A549 (cell line): ENCODE measurements at regions of chr11 and their contacts with region 1.

Region 1: DNA sequence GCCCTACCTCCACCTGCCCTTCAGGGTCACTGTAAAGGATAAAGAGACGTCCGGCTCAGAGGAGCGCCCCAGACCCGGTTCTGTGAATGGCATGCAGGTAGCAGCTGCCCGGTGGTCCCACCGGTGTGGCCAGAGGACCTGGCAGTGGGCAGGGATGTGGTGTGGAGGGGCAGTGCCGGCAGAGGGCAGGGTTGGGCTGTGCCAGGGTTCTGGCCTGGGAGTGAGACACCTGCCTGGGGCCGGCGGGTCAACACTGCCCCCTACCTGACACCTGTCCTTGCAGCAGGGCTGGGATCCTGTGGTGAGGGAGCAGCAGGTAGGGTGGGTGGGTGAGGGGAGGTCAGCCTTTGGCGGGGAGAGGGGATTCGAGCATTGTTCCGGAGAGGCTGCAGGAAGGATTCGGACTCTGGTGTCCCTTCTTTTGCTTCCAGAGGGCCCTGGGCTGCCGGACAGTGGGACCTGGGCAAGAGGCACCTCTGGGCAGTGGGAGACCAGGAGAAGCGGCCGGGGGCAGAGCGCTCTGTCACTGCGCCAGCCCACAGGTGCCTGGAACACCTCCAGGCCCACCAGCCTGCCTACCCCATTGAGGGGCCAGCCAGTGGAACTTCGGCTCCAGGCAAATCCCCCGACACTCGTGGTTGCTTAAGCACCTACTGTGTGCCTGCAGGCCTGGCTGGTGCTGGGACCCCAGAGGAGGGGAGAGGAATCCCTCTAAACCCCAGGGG is 1.6 kb upstream of the PHLDA2 start:
- DNase-seq: peak; percentile 86 to 90
- ATAC-seq: peak; percentile 45 to 78
- H3K4me3 ChIP-seq: peak overlapping the region; percentile 67
- H3K27ac ChIP-seq: peak overlapping the region; percentile 92 to 94
- H3K4me1 ChIP-seq: peaks cover 29% of the 10 kb centered on the region
- CTCF ChIP-seq: peak; percentile 98
- EP300 ChIP-seq: no peak
- POLR2A ChIP-seq: no peak
- RAD21 ChIP-seq: peak; percentile 94 to 96

Region 2: DNA sequence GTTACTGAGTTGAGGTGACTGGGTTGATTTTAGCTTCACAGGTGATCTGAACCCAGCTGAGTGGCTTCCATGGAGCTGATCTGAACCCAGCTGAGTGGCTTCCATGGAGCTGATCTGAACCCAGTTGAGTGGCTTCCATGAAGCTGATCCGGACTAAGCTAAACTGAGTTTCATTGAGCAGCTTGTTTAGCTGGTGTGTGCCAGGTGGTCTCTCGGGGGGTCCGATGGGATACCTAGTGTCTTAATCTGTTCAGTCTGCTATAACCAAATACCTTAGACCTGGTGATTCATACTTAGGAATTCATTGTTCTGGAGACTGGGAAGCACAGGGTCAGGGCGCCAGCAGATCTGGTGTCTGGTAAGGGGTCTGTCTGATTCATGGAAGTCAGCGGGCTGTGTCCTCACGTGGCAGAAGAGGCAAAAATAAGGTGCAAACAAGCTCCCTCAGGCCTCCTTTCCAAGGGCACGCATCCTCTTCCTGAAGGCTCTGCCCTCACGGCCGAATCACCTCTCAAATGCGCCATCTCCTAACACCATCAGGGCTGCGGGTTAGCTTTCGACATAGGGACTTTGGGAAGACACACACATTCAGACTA is 178.6 kb before region 1 on chr11:
- CTCF ChIA-PET with region 1: no interaction called
- POLR2A ChIA-PET with region 1: no interaction called
- DNase-seq: peak in 1 of 2 experiments; percentile 16
- ATAC-seq: peak in 1 of 2 experiments; percentile 62; a peak in 3 of 6 replicates
- H3K4me3 ChIP-seq: no peak overlapping the region
- H3K27ac ChIP-seq: peak overlapping the region in 1 of 2 experiments; percentile 10; a peak in 1 of 6 replicates
- H3K4me1 ChIP-seq: 0 out of 3 replicates have a peak, but pooled peaks cover 5% of the 10 kb centered on the region
- CTCF ChIP-seq: no peak
- EP300 ChIP-seq: no peak
- POLR2A ChIP-seq: no peak
- RAD21 ChIP-seq: no peak

Region 3: GRCh38 chr11:2892215-2893020 is 38.4 kb before region 1 on chr11:
- CTCF ChIA-PET with region 1: interaction called, 57 read pairs
- POLR2A ChIA-PET with region 1: interaction called, 41 read pairs
- DNase-seq: peak; percentile 49 to 74
- ATAC-seq: peak; percentile 42 to 74
- H3K4me3 ChIP-seq: peak overlapping the region; percentile 42
- H3K27ac ChIP-seq: peak overlapping the region; percentile 74 to 90
- H3K4me1 ChIP-seq: peaks cover 16% of the 10 kb centered on the region
- CTCF ChIP-seq: peak; percentile 83
- EP300 ChIP-seq: no peak
- POLR2A ChIP-seq: peak; percentile 28; the same call in 1 of the 2 replicates
- RAD21 ChIP-seq: peak; percentile 81 to 83

Region 4: GRCh38 chr11:2912498-2912897 is 18.4 kb before region 1 on chr11:
- CTCF ChIA-PET with region 1: interaction called, 37 read pairs
- POLR2A ChIA-PET with region 1: interaction called, 36 read pairs
- DNase-seq: peak; percentile 76 to 87
- ATAC-seq: peak; percentile 72 to 87
- H3K4me3 ChIP-seq: 0 out of 3 replicates have a peak overlapping the region, but pooled peaks have one; percentile 25
- H3K27ac ChIP-seq: peak overlapping the region; percentile 84 to 90
- H3K4me1 ChIP-seq: peaks cover 31% of the 10 kb centered on the region
- CTCF ChIP-seq: no peak
- EP300 ChIP-seq: no peak
- POLR2A ChIP-seq: no peak
- RAD21 ChIP-seq: no peak

Region 5: GRCh38 chr11:2951231-2952110 is 20.6 kb after region 1 on chr11:
- CTCF ChIA-PET with region 1: interaction called, 74 read pairs
- POLR2A ChIA-PET with region 1: interaction called, 3 read pairs
- DNase-seq: no peak
- ATAC-seq: no peak
- H3K4me3 ChIP-seq: no peak overlapping the region
- H3K27ac ChIP-seq: no peak overlapping the region
- H3K4me1 ChIP-seq: peaks cover 5% of the 10 kb centered on the region; the same call in 1 of the 3 replicates
- CTCF ChIP-seq: no peak
- EP300 ChIP-seq: no peak
- POLR2A ChIP-seq: no peak
- RAD21 ChIP-seq: no peak

Region 6: DNA sequence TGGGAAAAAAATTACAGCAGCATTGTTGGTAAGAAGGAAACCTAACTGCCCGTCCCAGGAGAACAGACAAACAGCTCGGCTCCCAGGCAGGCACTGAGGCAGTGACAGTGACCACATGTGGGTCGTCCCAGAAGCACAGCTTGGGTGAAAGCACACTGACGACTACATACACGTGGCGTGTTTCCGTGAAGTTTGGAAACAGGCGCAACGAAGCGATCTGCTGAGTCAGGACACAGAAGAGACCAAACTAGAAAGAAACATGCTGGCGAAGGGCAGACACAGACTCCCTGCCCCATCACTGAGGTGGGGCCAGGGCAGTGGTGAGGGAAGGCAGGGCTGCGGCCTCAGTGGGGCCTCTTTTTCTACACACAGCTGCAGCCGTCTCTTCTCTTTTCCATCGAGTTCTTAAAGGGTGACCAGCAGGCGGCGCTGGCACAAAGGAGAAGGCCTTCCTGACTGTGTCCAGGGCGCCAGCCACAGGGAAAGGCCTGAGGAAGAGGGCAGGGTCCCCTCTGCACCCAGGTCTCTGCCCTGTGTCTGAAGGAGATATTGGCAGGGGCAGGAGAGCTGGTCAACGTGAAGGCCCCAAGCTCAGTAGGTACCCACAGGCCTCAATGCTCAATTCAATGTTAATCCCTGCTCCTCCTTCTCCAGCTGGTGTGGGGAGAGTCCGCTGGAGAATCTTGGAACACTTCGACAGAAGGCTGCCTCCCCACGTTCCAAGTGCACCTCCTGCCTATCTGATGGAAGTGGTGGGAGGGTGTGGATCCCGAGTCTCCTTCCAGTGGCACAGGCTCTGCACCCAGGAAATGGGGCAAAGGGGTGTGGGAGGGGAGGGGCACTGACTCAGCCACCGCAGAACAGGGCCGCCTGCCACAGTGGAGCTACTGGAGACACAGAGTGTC is 106.4 kb after region 1 on chr11:
- CTCF ChIA-PET with region 1: interaction called, 14 read pairs
- POLR2A ChIA-PET with region 1: no interaction called
- DNase-seq: peak; percentile 75 to 76
- ATAC-seq: peak; percentile 84 to 98
- H3K4me3 ChIP-seq: no peak overlapping the region
- H3K27ac ChIP-seq: no peak overlapping the region
- H3K4me1 ChIP-seq: no peaks in the 10 kb centered on the region
- CTCF ChIP-seq: peak; percentile 87
- EP300 ChIP-seq: no peak
- POLR2A ChIP-seq: no peak
- RAD21 ChIP-seq: peak; percentile 73 to 89